ENCODE measurements at regions of chr9 and their contacts with region 1.

Region 1: DNA sequence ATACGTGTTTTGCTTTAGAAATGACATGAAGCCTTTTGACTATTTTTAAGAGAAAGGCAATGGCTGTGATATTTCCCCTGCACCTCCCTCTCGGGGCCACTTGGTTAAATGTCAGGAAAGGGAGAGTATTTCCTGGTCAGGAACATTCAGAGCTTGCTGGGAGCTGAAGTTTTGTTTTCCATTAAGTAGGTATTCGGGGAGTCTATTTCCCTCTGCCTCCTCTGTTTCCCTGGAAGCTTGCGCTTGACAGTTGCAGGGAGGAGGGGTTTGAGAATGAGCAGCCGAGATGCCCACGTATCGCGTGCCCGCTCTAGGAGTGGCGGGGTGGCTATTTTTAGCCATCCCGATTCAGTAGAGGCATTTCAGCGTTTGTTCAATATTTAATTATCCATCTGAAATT is 6.7 kb downstream of the DAB2IP start:
- DNase-seq: no peak
- H3K4me3 ChIP-seq: no peak overlapping the region
- H3K27ac ChIP-seq: peak overlapping the region; percentile 22 to 50 (median 38)
- H3K4me1 ChIP-seq: peaks cover 0 to 49% (median 16%) of the 10 kb centered on the region in 4 donors
- H3K27me3 ChIP-seq: no peaks in the 10 kb centered on the region
- CTCF ChIP-seq: peak in 1 of 5 experiments; percentile 17
- EP300 ChIP-seq: no peak
- POLR2A ChIP-seq: no peak

Region 2: GRCh38 chr9:121698627-121699570 is 40.7 kb after region 1 on chr9:
- in situ Hi-C with region 1: no loop called
- intact Hi-C with region 1: loop called (anchors 5 kb)
- DNase-seq: peak; percentile 68
- H3K4me3 ChIP-seq: peak overlapping the region; percentile 21 to 56 (median 50)
- H3K27ac ChIP-seq: peak overlapping the region; percentile 56 to 66 (median 59)
- H3K4me1 ChIP-seq: peaks cover 9 to 33% (median 20%) of the 10 kb centered on the region in 4 donors
- H3K27me3 ChIP-seq: peaks cover 10% of the 10 kb centered on the region
- CTCF ChIP-seq: no peak
- EP300 ChIP-seq: no peak
- POLR2A ChIP-seq: no peak

Measured in transverse colon (tissue), 4 donors.